ENCODE measurements at regions of chr1 and their contacts with region 1.

Region 1: GRCh38 chr1:169367486-169368405 is at the starts of genes BLZF1 and NME7:
- DNase-seq: peak; percentile 95 to 97 (median 97)
- ATAC-seq: peak; percentile 99 to 100 (median 100)
- H3K4me3 ChIP-seq: peak within 1 kb of the TSS; percentile 50 to 85 (median 74)
- H3K27ac ChIP-seq: peak within 1 kb of the TSS; percentile 19 to 94 (median 80)
- H3K4me1 ChIP-seq: peaks cover 0 to 51% (median 14%) of the 10 kb centered on the region in 12 donors
- H3K27me3 ChIP-seq: no peaks in the 10 kb centered on the region
- CTCF ChIP-seq: no peak
- POLR2A ChIP-seq: peak in 1 of 2 donors; percentile 31
- total RNA-seq, gene BLZF1: 16.5 to 31.3 (median 23.6) TPM
- total RNA-seq, gene NME7: 6.9 to 14.9 (median 8.4) TPM

Region 2: DNA sequence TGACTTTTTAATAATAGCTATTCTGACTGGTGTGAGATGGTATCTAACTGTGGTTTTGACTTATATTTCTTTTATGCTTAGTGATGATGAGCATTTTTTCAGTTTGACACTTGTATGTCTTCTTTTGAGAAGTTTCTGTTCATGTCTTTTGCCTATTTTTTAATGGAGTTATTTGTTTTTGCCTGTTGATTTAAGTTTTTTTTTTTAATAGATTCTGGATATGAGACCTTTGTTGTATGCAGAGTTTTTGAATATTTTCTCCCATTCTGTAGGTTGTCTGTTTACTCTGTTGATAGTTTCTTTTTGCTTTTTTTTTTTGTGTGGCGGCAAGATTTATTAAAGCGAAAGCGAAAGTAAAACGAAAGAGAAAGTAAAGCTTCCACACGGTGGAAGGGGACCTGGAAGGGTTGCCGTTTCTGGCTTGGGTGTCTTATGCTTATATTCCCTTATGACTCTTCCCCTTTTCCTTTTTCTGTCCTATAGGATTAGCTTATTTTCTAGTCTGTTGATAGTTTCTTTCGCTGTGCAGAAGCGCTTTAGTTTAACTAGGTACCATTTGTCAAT is 1019.5 kb before region 1 on chr1:
- intact Hi-C with region 1: loop called in 2 of 10 experiments (anchors 5 to 10 kb)
- DNase-seq: no peak
- ATAC-seq: no peak
- H3K4me3 ChIP-seq: peak overlapping the region in 10 of 12 donors; percentile 6 to 54 (median 46)
- H3K27ac ChIP-seq: peak overlapping the region in 4 of 12 donors; percentile 14 to 70 (median 30)
- H3K4me1 ChIP-seq: peaks cover 0 to 3% (median 0%) of the 10 kb centered on the region in 12 donors
- H3K27me3 ChIP-seq: no peaks in the 10 kb centered on the region
- CTCF ChIP-seq: no peak
- POLR2A ChIP-seq: no peak

Region 3: GRCh38 chr1:169485544-169486278 is 118.0 kb after region 1 on chr1 and contains the start of gene SLC19A2:
- intact Hi-C with region 1: loop called in 3 of 10 experiments (anchors 5 kb)
- DNase-seq: peak; percentile 99 to 100 (median 100)
- ATAC-seq: peak; percentile 94 to 99 (median 97)
- H3K4me3 ChIP-seq: peak within 1 kb of the TSS; percentile 50 to 95 (median 84)
- H3K27ac ChIP-seq: peak within 1 kb of the TSS; percentile 94 to 99 (median 98)
- H3K4me1 ChIP-seq: peaks cover 0 to 40% (median 19%) of the 10 kb centered on the region in 12 donors
- H3K27me3 ChIP-seq: no peaks in the 10 kb centered on the region
- CTCF ChIP-seq: peak in 9 of 12 donors; percentile 15 to 61 (median 40)
- POLR2A ChIP-seq: peak; percentile 75 to 98
- total RNA-seq, gene SLC19A2: 8.2 to 27.3 (median 13.8) TPM